ENCODE measurements at regions of chr14 and their contacts with region 1.

Region 1: DNA sequence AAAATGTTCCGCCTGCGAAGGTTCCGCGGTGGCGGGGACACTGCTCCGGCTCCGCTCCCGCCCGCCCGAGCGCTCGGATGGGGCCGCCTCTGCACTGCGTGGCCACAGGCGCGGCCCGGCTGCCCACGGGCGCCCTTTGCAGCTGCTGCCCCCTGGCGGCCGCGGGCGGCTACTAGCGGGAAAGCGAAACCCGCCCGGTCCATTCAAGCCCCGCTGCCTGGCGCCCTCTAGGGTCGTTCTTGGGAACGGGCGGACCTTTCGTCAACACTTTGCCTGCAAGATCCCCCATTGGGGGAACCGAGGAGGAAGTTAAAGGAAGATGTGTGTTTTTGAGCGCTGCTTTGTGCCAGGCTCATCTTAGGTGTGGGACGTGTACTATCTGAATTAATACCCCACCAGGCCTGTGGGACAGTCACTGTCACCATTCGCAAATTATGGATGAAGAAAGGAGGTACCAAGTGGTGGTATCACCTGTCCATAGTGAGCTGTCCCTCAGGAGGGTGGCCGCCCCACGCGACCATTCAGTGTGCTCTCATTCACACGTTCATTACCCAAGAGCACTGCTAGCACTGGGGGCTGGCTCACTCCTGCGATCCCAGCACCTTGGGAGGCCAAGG is 19.4 kb downstream of the GPR132 start:
- DNase-seq: peak; percentile 95
- ATAC-seq: peak; percentile 94
- H3K4me3 ChIP-seq: no peak overlapping the region
- H3K4me3 Mint-ChIP-seq: peak overlapping the region; percentile 1
- H3K27ac ChIP-seq: peak overlapping the region; percentile 11 to 24
- H3K27ac Mint-ChIP-seq: peak overlapping the region; percentile 28
- H3K4me1 ChIP-seq: peaks cover 5 to 18% of the 10 kb centered on the region in 2 donors
- H3K4me1 Mint-ChIP-seq: peaks cover 10% of the 10 kb centered on the region
- H3K27me3 ChIP-seq: peaks cover 0 to 9% (median 0%) of the 10 kb centered on the region in 4 experiments
- H3K27me3 Mint-ChIP-seq: no peaks in the 10 kb centered on the region
- CTCF ChIP-seq: peak; percentile 100

Region 2: GRCh38 chr14:104976198-104977007 is 69.4 kb before region 1 on chr14:
- CTCF ChIA-PET with region 1: interaction called, 132 read pairs
- POLR2A ChIA-PET with region 1: interaction called, 6 read pairs
- intact Hi-C with region 1: loop called (anchors 1 kb)
- DNase-seq: peak; percentile 87
- ATAC-seq: peak; percentile 77
- H3K4me3 ChIP-seq: no peak overlapping the region
- H3K4me3 Mint-ChIP-seq: peak overlapping the region; percentile 82
- H3K27ac ChIP-seq: no peak overlapping the region
- H3K27ac Mint-ChIP-seq: peak overlapping the region; percentile 38
- H3K4me1 ChIP-seq: peaks cover 20 to 24% of the 10 kb centered on the region in 2 donors
- H3K4me1 Mint-ChIP-seq: peaks cover 12% of the 10 kb centered on the region
- H3K27me3 ChIP-seq: peaks cover 0 to 32% (median 15%) of the 10 kb centered on the region in 4 experiments
- H3K27me3 Mint-ChIP-seq: peaks cover 29% of the 10 kb centered on the region
- CTCF ChIP-seq: peak; percentile 91

Region 3: GRCh38 chr14:105012171-105012985 is 33.4 kb before region 1 on chr14:
- CTCF ChIA-PET with region 1: interaction called, 13 read pairs
- POLR2A ChIA-PET with region 1: interaction called, 4 read pairs
- intact Hi-C with region 1: loop called (anchors 1 kb)
- DNase-seq: no peak
- ATAC-seq: peak; percentile 31
- H3K4me3 ChIP-seq: no peak overlapping the region
- H3K4me3 Mint-ChIP-seq: no peak overlapping the region
- H3K27ac ChIP-seq: no peak overlapping the region
- H3K27ac Mint-ChIP-seq: no peak overlapping the region
- H3K4me1 ChIP-seq: peaks cover 6 to 7% of the 10 kb centered on the region in 2 donors
- H3K4me1 Mint-ChIP-seq: peaks cover 43% of the 10 kb centered on the region
- H3K27me3 ChIP-seq: no peaks in the 10 kb centered on the region
- H3K27me3 Mint-ChIP-seq: no peaks in the 10 kb centered on the region
- CTCF ChIP-seq: peak; percentile 21

Region 4: DNA sequence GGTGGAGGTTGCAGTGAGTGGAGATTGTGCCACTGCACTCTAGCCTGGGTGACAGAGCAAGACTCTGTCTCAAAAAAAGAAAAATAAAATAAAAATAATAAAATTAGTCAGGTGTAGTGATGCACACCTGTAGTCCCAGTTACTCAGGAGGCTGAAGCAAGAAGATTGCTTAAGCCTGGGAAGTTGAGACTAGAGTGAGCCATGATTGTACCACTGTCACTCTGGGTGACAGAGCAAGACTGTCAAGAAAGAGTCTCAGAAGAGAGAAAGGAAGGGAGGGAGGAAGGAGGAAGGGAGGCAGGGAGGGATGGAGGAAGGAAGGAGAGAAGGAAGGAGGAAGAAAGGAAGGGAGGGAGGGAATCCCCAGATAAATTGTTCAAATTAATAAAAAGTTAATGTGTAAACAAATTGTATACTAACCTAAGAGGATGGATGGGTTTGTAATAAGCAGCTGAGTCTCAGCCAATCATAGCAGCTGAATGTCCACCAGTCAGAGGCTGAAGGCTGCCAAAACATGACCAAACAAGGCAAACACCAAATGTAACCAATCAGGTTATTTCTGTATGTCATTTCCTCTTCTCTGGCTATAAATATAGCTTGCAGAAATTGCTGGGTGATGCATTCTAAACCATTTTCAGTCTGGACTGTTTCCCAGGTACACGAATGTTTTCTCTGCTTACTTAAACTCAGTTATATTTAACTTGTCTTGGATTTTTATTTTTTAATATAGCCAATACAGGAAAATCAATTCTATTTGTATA is 18.8 kb before region 1 on chr14:
- CTCF ChIA-PET with region 1: interaction called, 31 read pairs
- POLR2A ChIA-PET with region 1: no interaction called
- intact Hi-C with region 1: no loop called
- DNase-seq: peak; percentile 6
- ATAC-seq: no peak
- H3K4me3 ChIP-seq: no peak overlapping the region
- H3K4me3 Mint-ChIP-seq: no peak overlapping the region
- H3K27ac ChIP-seq: no peak overlapping the region
- H3K27ac Mint-ChIP-seq: no peak overlapping the region
- H3K4me1 ChIP-seq: peaks cover 0 to 16% of the 10 kb centered on the region in 2 donors
- H3K4me1 Mint-ChIP-seq: peaks cover 24% of the 10 kb centered on the region
- H3K27me3 ChIP-seq: no peaks in the 10 kb centered on the region
- H3K27me3 Mint-ChIP-seq: no peaks in the 10 kb centered on the region
- CTCF ChIP-seq: no peak

Region 5: DNA sequence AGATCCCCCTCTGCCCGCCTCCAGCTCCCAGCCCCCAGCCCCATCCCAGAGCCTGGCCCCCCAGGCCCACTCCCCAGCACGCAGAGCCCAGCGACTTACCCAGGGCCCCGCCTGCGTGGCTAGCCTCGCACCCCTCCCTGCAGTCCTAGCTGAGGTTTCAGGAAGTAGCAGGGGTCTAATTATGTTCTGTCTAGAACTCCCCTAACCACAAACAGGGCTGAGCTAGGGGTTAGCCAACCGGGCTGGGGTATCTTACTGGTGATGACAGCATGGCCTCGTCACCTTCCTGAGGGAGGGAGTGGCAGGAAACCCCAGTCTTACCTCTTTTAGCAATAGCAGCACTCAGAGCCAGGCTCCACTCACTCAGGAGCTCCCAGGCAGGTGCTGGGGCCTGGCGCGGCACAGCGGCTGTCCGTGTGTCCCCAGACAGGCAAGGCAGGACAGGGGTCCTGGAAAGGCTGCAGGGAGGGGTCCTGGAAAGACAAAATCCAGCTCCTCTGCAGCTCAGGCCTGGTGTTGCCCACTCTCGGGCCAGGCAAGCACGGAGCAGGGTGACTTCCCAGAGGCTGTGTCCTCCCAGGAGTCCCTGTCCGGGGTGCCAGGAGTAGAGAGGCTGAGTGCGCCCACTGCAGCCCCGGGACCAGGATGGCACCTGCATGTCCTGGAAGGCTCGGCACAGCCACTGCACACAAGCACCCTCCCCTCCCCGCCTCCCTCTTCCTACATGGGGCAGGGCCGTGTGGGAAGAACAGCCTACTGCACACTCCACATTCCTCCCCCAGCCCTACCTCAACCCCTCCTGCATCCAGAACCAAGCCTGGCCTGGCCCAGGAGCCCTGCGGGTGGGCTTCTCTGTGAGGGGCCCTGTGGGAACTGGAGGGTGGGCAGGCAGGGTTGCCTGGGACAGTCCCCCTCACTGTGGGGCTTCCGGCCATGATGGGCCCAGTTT is 19.7 kb after region 1 on chr14 and contains the start of gene GPR132:
- CTCF ChIA-PET with region 1: interaction called, 51 read pairs
- POLR2A ChIA-PET with region 1: interaction called, 3 read pairs
- intact Hi-C with region 1: loop called (anchors 2 kb)
- DNase-seq: peak; percentile 96
- ATAC-seq: peak; percentile 78
- H3K4me3 ChIP-seq: peak within 1 kb of the TSS; percentile 81 to 100 (median 91)
- H3K4me3 Mint-ChIP-seq: peak within 1 kb of the TSS; percentile 87
- H3K27ac ChIP-seq: peak within 1 kb of the TSS; percentile 93 to 98
- H3K27ac Mint-ChIP-seq: peak within 1 kb of the TSS; percentile 98
- H3K4me1 ChIP-seq: peaks cover 79 to 95% of the 10 kb centered on the region in 2 donors
- H3K4me1 Mint-ChIP-seq: peaks cover 82% of the 10 kb centered on the region
- H3K27me3 ChIP-seq: no peaks in the 10 kb centered on the region
- H3K27me3 Mint-ChIP-seq: no peaks in the 10 kb centered on the region
- CTCF ChIP-seq: no peak
- total RNA-seq, gene GPR132: 54.5 and 63.2 TPM in 2 replicates

Region 6: DNA sequence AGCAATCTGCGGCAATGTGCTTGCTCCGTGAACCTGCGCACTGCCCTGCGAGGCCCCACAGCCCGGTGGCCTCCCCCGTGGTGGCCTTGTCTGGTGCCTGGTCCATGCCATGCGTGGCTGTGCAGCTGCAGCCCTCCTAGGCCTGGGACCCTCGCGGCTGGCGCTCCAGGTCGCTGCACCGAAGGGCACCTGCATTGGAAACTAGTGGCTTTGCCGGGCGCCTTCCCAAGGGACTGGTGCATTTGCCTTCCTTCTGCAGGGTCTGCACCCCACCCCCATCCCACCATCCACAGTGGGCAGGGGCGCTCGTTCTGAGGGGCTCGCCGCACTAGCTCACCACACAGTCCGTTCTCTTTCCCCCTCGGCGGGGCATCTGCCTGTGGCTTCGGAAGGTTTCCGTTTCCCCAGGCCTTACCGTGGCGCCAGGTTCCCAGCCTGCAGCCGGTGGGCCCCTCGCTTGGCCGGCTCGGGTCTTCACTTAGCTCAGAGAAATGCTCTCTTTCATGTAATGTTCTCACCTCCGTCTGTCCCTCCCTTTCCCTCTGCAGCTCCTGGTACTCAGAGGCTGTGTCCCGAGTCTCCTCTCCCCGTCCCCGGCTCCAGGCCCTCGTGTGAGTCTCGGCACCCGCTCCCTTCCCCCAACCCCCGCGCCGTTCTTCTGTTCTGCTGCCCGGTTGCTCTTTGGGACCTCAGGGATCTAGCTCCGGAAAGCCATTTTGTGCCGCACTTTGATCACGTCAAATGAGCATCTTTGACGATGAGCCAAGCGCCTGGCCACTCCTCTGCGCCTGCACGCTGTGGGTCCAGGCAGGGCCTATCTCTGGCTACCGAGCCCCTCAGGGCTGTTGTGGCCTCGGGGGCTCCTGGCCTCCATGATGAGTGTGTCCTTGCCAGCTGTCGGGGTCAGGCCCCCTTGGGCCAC is 90.8 kb after region 1 on chr14:
- CTCF ChIA-PET with region 1: no interaction called
- POLR2A ChIA-PET with region 1: no interaction called
- intact Hi-C with region 1: no loop called
- DNase-seq: no peak
- ATAC-seq: no peak
- H3K4me3 ChIP-seq: no peak overlapping the region
- H3K4me3 Mint-ChIP-seq: no peak overlapping the region
- H3K27ac ChIP-seq: no peak overlapping the region
- H3K27ac Mint-ChIP-seq: no peak overlapping the region
- H3K4me1 ChIP-seq: no peaks in the 10 kb centered on the region
- H3K4me1 Mint-ChIP-seq: no peaks in the 10 kb centered on the region
- H3K27me3 ChIP-seq: peaks cover 0 to 8% (median 0%) of the 10 kb centered on the region in 4 experiments
- H3K27me3 Mint-ChIP-seq: peaks cover 8% of the 10 kb centered on the region
- CTCF ChIP-seq: no peak

Region 7: GRCh38 chr14:105419195-105420091 is 373.6 kb after region 1 on chr14 and contains the start of gene MTA1:
- CTCF ChIA-PET with region 1: no interaction called
- POLR2A ChIA-PET with region 1: no interaction called
- intact Hi-C with region 1: no loop called
- DNase-seq: peak; percentile 70
- ATAC-seq: peak; percentile 76
- H3K4me3 ChIP-seq: peak within 1 kb of the TSS in 4 of 5 experiments; percentile 55 to 68 (median 65)
- H3K4me3 Mint-ChIP-seq: peak within 1 kb of the TSS; percentile 85
- H3K27ac ChIP-seq: peak within 1 kb of the TSS in 1 of 2 donors; percentile 44
- H3K27ac Mint-ChIP-seq: peak within 1 kb of the TSS; percentile 84
- H3K4me1 ChIP-seq: peaks cover 36 to 39% of the 10 kb centered on the region in 2 donors
- H3K4me1 Mint-ChIP-seq: peaks cover 40% of the 10 kb centered on the region
- H3K27me3 ChIP-seq: peaks cover 0 to 8% (median 3%) of the 10 kb centered on the region in 4 experiments
- H3K27me3 Mint-ChIP-seq: no peaks in the 10 kb centered on the region
- CTCF ChIP-seq: no peak
- total RNA-seq, gene MTA1: 131 and 137 TPM in 2 replicates